Prostate gland (tissue), 2 donors: ENCODE measurements at regions of chr13 and their contacts with region 1.

Region 1: GRCh38 chr13:102913914-102914313 is 68.1 kb downstream of the ERCC5 start:
- DNase-seq: peak; percentile 63
- H3K4me3 ChIP-seq: no peak overlapping the region
- H3K27ac ChIP-seq: no peak overlapping the region
- H3K4me1 ChIP-seq: no peaks in the 10 kb centered on the region
- H3K27me3 ChIP-seq: no peaks in the 10 kb centered on the region
- CTCF ChIP-seq: no peak
- POLR2A ChIP-seq: no peak

Region 2: DNA sequence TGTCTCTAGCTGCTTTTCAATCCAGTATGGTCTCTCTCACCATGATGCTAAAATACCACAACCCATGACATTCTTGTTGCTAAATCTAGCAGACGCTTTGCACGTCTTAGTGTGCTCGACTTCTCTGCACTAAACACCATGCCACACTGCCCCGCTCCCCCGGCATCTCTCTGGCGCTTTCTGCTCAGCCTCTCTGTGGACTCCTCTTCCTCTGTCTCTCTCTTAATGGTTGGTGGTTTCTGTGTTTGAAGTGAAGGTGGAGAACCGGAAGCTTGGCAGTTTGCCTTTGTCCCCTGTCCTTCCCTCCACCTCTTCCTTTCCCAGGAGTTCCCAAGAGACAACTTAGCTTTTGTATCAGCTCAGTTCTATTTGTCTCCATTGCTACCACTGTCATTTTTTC is 59.2 kb before region 1 on chr13:
- intact Hi-C with region 1: no loop called
- DNase-seq: no peak
- H3K4me3 ChIP-seq: no peak overlapping the region
- H3K27ac ChIP-seq: no peak overlapping the region
- H3K4me1 ChIP-seq: no peaks in the 10 kb centered on the region
- H3K27me3 ChIP-seq: no peaks in the 10 kb centered on the region
- CTCF ChIP-seq: no peak
- POLR2A ChIP-seq: no peak

Region 3: GRCh38 chr13:103140001-103140671 is 226.2 kb after region 1 on chr13:
- intact Hi-C with region 1: loop called (anchors 2 kb)
- DNase-seq: peak; percentile 17
- H3K4me3 ChIP-seq: no peak overlapping the region
- H3K27ac ChIP-seq: no peak overlapping the region
- H3K4me1 ChIP-seq: no peaks in the 10 kb centered on the region
- H3K27me3 ChIP-seq: no peaks in the 10 kb centered on the region
- CTCF ChIP-seq: peak in 3 of 4 experiments; percentile 39 to 67 (median 42)
- POLR2A ChIP-seq: no peak

Region 4: GRCh38 chr13:103157016-103157415 is 243.1 kb after region 1 on chr13:
- intact Hi-C with region 1: no loop called
- DNase-seq: no peak
- H3K4me3 ChIP-seq: no peak overlapping the region
- H3K27ac ChIP-seq: no peak overlapping the region
- H3K4me1 ChIP-seq: no peaks in the 10 kb centered on the region
- H3K27me3 ChIP-seq: no peaks in the 10 kb centered on the region
- CTCF ChIP-seq: no peak
- POLR2A ChIP-seq: no peak